ENCODE measurements at regions of chr18 and their contacts with region 1.

Region 1: DNA sequence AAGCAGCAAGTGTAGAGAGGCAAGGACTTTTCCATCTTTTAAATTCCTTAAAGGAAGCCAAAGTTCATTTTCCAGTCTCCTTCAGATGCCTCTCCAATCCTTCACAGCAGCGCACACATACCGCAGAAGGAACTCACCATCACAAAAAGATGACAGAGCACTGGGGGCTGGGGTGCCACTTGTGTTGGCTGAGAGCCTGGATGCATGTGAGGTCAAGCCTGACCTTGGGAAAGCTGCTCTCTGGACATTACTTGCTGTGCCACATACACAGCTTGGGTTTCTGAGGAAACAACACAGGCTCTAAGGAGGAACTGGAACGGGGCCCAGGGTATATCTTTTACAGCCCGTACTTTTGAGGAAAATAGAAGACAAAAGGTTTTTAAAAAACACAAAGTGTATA is 364.3 kb upstream of the MEX3C start:
- DNase-seq: no peak
- ATAC-seq: peak; percentile 77

Region 2: DNA sequence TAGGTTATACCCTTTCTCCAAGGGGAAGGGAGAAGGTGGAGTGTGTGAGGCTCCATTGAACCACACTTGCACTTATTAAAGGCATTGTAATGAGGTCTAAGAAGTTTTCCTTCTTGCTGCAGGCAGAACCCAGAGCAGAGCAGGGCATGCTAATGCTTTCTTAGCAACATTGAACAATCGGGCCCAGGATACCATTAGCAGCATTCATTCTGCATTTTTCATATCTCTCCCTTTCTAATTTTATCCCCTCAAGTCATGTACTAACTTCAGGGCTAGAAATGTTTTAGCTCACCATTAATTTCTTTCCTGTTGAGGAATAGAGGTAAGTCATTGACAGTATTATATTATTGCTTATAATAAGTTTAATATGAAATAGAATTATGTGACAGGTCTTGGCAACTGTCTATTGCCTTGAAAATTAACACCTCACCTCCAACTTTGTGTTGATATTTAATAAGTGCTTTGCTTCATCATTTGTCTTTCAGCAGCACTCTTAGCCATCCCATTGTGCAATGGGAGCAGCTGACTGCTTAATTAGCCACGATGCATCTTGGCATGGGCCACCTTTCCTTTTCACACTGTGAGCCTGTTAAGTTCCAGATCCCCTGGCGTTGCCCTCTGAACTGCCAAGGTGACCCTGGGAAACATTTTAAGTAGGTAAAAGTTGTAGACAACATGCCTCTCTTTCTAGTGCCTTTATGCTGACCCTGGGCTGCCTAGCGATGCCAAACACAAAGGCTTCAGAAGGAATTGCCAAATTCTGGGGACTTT is 63.6 kb before region 1 on chr18:
- intact Hi-C with region 1: loop called (anchors 1 kb)
- DNase-seq: peak; percentile 53
- ATAC-seq: peak; percentile 95